Activated CD4-positive, alpha-beta memory T cell treated with anti-CD3 and anti-CD28 coated beads for 36 hours (primary cell): ENCODE measurements at regions of chr2 and their contacts with region 1.

Region 1: GRCh38 chr2:147632198-147632597 is 212.6 kb upstream of the ACVR2A start:
- DNase-seq: no peak
- H3K4me3 Mint-ChIP-seq: no peak overlapping the region
- H3K27ac Mint-ChIP-seq: no peak overlapping the region
- H3K4me1 Mint-ChIP-seq: peaks cover 46% of the 10 kb centered on the region
- H3K27me3 Mint-ChIP-seq: no peaks in the 10 kb centered on the region

Region 2: DNA sequence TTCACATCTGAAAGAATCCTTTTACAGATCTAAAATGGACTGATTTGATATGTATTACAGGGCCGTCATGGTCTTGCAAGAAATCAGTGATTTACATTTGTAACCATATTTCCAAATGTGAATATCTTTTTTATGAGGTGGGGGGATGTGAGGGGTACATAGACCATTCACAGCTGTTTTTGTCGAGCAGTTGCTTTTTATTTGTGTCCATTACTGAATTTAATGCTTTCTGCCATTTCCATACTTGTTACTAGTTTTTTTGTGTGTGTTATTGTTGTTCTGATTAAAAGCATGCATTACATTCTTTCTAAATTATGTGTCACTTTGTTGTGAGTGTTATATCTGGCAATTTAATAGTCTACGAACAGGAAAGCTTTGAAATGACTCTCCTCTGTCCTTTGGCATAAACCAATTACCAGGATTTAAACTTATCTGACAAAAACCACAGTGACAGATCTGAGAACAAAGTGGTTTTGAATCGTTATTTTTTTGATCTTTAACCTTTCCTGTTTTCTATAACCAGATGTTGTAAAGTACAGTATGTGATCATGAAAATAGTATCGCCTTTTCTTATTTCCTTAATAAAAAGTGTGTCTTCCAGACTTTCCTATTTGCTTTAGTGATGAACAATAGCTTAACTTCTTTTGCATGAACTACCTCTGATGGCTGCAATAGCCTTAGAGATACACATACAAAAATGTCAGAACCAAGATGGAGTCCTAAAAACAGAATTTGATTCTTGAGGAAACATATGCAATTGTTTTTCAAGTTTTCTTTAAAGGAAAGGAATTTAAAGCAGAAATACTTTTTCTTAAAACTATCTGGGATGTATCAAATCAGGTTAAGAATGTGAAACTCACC is 141.6 kb before region 1 on chr2:
- CTCF ChIA-PET with region 1: no interaction called
- POLR2A ChIA-PET with region 1: no interaction called
- intact Hi-C with region 1: loop called (anchors 5 kb)
- DNase-seq: no peak
- H3K4me3 Mint-ChIP-seq: no peak overlapping the region
- H3K27ac Mint-ChIP-seq: no peak overlapping the region
- H3K4me1 Mint-ChIP-seq: peaks cover 28% of the 10 kb centered on the region
- H3K27me3 Mint-ChIP-seq: no peaks in the 10 kb centered on the region

Region 3: GRCh38 chr2:147538088-147538487 is 94.1 kb before region 1 on chr2:
- CTCF ChIA-PET with region 1: no interaction called
- POLR2A ChIA-PET with region 1: no interaction called
- intact Hi-C with region 1: no loop called
- DNase-seq: no peak
- H3K4me3 Mint-ChIP-seq: no peak overlapping the region
- H3K27ac Mint-ChIP-seq: no peak overlapping the region
- H3K4me1 Mint-ChIP-seq: peaks cover 3% of the 10 kb centered on the region
- H3K27me3 Mint-ChIP-seq: no peaks in the 10 kb centered on the region

Region 4: DNA sequence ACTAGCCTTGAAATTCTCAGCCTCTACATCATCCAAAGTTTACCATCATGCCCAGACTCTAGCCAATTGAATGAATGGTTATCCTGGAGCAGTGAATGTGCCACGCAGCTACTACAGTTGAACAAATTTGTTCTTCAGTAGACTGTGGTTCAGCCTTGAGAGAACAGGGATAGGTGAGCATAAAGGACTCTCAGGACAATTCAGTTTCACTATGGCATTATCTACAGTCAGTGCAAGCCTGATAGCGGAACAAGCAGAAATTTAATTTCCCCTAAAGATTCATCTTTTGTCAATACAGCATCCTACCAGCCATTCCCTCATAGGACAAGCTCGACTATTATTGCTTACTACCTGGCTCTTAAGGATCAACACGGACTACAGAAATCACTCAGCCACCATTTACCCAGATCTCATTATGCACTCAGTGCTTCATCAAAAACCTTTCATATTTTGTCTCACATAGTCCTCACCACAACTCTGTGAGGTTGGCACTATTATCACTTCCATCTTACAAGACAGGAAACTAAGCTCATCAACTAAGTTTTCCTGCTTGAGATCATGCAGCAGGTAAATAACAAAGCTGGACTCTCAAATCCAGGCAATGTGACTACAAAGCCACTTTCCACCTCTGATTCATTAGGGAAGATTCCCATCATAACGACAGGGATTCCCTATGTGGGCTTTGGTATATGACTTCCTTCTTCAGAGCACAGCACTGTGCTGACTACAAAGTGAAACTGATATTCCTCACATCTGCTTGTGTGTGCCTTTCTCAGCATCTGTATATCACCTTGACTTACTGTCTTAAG is 31.2 kb after region 1 on chr2:
- CTCF ChIA-PET with region 1: no interaction called
- POLR2A ChIA-PET with region 1: no interaction called
- intact Hi-C with region 1: loop called (anchors 1 kb)
- DNase-seq: peak; percentile 10
- H3K4me3 Mint-ChIP-seq: peak overlapping the region; percentile 51
- H3K27ac Mint-ChIP-seq: peak overlapping the region; percentile 82
- H3K4me1 Mint-ChIP-seq: peaks cover 24% of the 10 kb centered on the region
- H3K27me3 Mint-ChIP-seq: no peaks in the 10 kb centered on the region